ENCODE measurements at regions of chr10 and their contacts with region 1.

Region 1: GRCh38 chr10:101693978-101694673 is 844 bp downstream of the FBXW4 start:
- DNase-seq: peak; percentile 60
- H3K4me3 ChIP-seq: peak overlapping the region; percentile 85 to 87
- H3K27ac ChIP-seq: peak overlapping the region; percentile 97 to 99
- H3K4me1 ChIP-seq: peaks cover 10% of the 10 kb centered on the region
- H3K27me3 ChIP-seq: no peaks in the 10 kb centered on the region
- CTCF ChIP-seq: no peak
- POLR2A ChIP-seq: peak; percentile 23

Region 2: DNA sequence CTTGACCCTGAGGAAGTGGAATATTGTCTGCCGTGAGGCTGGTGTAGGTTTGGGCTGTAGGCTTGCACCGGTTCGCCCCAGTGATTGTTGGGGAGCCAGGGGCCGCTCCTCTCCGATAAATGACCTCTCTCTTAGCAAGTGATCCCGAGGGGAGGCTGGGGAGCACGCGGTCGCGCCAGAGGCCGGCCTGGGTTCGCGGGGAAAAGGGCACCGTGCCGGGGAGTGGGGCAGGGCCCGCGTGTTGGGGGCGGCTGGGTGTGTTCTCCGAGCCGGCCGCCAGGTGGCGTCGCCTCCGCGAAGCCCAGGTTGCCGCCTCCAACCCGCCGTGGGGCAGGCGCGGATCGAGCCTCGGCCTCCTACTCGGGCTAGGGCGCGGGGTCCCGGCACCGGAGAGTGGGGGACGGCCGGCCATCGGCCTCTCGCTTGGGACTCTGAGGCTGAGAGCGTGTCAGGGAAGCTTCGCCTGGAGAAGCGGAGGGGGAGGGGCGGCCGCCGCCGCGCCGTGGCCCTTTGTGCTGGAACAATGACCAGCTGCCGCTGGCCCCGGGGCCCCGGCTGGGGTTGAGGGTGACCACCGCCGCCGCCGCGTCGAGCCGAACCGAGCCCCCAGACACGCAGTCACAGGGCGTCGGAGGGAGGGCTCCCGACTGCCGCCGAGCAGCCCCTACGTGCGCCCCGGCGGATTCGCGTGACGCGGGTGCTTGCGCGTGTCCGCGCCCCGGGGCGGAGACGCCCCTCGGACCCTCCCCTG is 695.0 kb before region 1 on chr10:
- intact Hi-C with region 1: loop called (anchors 10 kb)
- DNase-seq: peak; percentile 72
- H3K4me3 ChIP-seq: peak overlapping the region; percentile 64 to 91
- H3K27ac ChIP-seq: peak overlapping the region; percentile 99 to 100
- H3K4me1 ChIP-seq: peaks cover 23% of the 10 kb centered on the region
- H3K27me3 ChIP-seq: no peaks in the 10 kb centered on the region
- CTCF ChIP-seq: peak; percentile 98 to 99 (median 98)
- POLR2A ChIP-seq: peak; percentile 96

Region 3: DNA sequence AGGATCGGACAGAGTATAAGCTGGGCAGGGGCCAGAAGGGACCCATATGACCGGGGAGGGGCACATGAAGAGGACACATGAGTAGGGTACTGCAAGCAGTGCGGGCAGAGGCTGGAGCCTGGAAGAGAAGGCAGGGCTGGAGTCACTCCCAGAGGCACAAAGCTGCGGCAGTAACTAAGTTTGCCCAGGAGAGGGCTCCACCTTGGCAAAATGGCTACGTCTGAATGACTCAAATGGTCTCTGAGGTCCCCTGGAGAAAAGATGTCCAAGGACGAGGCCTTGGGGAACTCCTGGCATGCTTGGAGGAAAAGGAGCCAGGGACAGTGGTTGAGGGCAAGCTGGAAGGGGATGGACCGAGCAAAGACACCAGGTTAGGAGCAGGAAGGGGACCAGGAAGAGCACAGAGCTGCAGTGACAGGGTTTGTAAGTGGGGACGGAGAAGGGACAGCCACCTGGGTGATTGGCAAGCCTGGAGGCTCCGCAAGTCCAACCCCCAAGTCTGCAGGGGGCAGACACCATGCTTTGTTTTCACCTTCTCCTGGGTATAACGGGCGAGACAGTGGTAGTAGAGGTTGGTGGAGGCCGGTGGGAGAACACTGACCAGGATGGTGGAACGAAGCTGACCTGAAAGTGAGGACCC is 421.8 kb before region 1 on chr10:
- intact Hi-C with region 1: no loop called
- DNase-seq: peak; percentile 28
- H3K4me3 ChIP-seq: no peak overlapping the region
- H3K27ac ChIP-seq: no peak overlapping the region
- H3K4me1 ChIP-seq: no peaks in the 10 kb centered on the region
- H3K27me3 ChIP-seq: no peaks in the 10 kb centered on the region
- CTCF ChIP-seq: peak in 3 of 4 experiments; percentile 48 to 64 (median 51)
- POLR2A ChIP-seq: no peak

Region 4: DNA sequence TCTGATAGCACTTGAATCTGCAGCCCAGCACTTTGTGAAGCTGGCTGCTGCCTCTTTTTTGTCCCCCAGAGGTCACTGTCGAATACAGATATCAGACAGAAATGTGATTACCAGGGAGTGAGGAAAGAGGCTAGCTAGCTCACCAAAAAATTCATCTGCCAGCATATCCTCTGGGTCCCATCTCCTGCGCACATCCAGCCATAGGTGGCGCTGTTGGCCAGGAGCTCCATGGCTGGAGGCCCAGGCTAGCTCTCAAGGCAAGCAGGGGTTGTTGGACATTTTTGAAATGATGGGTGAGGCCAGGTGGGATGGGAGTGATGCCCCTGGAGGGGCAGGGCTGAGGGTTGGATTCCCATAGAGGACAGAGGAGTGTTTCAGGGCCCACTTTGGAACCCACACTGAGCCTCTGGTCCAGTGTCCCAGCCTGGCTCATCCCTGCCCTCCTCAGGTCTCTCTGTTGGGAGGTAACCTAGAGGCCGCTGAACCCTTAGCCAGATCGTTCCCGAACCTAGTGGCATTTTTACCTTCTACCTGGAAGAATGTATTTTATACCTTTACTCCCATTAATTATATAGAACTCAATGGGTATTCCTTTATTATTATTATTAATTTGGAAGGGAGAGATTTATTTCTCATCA is 91.2 kb before region 1 on chr10:
- intact Hi-C with region 1: loop called (anchors 10 kb)
- DNase-seq: peak; percentile 48
- H3K4me3 ChIP-seq: no peak overlapping the region
- H3K27ac ChIP-seq: no peak overlapping the region
- H3K4me1 ChIP-seq: no peaks in the 10 kb centered on the region
- H3K27me3 ChIP-seq: no peaks in the 10 kb centered on the region
- CTCF ChIP-seq: peak; percentile 54 to 76 (median 69)
- POLR2A ChIP-seq: no peak

Region 5: DNA sequence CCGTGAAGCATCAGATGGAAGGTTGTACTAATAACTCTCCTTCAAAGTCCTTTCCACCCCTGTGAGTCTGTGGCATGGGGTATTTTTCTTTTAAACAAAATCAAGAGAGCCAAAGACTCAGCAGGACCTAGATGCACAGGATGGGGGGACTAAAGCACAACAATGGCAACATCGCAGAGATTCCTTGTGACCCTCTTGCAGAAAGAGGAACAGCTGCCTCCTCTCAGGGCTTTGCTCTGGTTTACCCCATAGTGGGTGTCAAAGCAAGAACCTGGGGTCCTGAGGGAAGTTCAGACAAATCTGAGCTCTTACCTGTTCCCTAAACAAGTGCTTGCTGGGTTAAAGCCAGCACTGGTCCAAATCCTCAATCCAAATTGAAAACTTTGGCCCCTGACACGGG is 42.5 kb after region 1 on chr10:
- intact Hi-C with region 1: no loop called
- DNase-seq: no peak
- H3K4me3 ChIP-seq: no peak overlapping the region
- H3K27ac ChIP-seq: no peak overlapping the region
- H3K4me1 ChIP-seq: no peaks in the 10 kb centered on the region
- H3K27me3 ChIP-seq: no peaks in the 10 kb centered on the region
- CTCF ChIP-seq: no peak
- POLR2A ChIP-seq: no peak